Prostate gland (tissue), 2 donors: ENCODE measurements at regions of chr6 and their contacts with region 1.

Region 1: GRCh38 chr6:22873513-22874136 is 304.3 kb downstream of the HDGFL1 start:
- DNase-seq: peak; percentile 45
- H3K4me3 ChIP-seq: no peak overlapping the region
- H3K27ac ChIP-seq: no peak overlapping the region
- H3K4me1 ChIP-seq: no peaks in the 10 kb centered on the region
- H3K27me3 ChIP-seq: no peaks in the 10 kb centered on the region
- CTCF ChIP-seq: no peak
- POLR2A ChIP-seq: no peak

Region 2: GRCh38 chr6:22043284-22043962 is 830.2 kb before region 1 on chr6:
- intact Hi-C with region 1: loop called (anchors 10 kb)
- DNase-seq: no peak
- H3K4me3 ChIP-seq: no peak overlapping the region
- H3K27ac ChIP-seq: peak overlapping the region; percentile 44 to 53
- H3K4me1 ChIP-seq: no peaks in the 10 kb centered on the region
- H3K27me3 ChIP-seq: no peaks in the 10 kb centered on the region
- CTCF ChIP-seq: no peak
- POLR2A ChIP-seq: no peak

Region 3: GRCh38 chr6:22828179-22829062 is 45.2 kb before region 1 on chr6:
- intact Hi-C with region 1: loop called (anchors 5 kb)
- DNase-seq: peak; percentile 73
- H3K4me3 ChIP-seq: no peak overlapping the region
- H3K27ac ChIP-seq: peak overlapping the region; percentile 26 to 48
- H3K4me1 ChIP-seq: peaks cover 5% of the 10 kb centered on the region
- H3K27me3 ChIP-seq: no peaks in the 10 kb centered on the region
- CTCF ChIP-seq: peak in 2 of 4 experiments; percentile 50 to 68
- POLR2A ChIP-seq: no peak

Region 4: DNA sequence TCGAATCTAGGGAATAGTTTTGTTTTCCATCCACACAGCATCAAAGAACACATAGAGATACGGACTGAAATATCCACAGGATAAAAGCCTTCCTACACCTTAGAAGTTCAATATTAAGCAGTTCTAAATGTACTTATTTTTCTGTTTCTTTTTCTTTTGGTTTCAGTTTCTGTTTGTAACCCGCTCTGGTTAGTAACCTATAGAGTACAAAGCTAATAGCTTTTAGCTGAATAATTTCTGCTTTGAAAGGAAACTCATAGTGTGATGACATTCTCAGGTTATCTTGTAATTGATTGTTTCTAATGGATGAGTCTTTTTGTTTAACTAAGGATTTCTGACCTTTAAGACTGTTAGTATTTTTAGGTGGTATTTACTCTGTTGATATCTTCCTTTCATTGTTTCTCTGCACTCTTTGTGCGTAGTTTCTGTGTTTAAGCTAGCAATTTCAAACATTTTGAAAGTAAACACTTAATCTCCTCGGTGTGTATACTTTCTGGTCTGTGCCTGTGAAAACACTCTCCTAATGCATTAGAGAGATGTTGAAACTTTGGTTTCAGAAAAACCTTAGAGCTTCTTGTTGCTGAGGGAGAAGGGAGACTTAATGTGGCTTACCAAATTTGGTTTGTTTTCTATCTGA is 81.2 kb after region 1 on chr6:
- intact Hi-C with region 1: loop called (anchors 10 kb)
- DNase-seq: no peak
- H3K4me3 ChIP-seq: no peak overlapping the region
- H3K27ac ChIP-seq: no peak overlapping the region
- H3K4me1 ChIP-seq: peaks cover 4% of the 10 kb centered on the region
- H3K27me3 ChIP-seq: no peaks in the 10 kb centered on the region
- CTCF ChIP-seq: no peak
- POLR2A ChIP-seq: no peak